ENCODE measurements at regions of chr2 and their contacts with region 1.

Region 1: GRCh38 chr2:21317131-21317530 is 193.4 kb downstream of the TDRD15 start:
- DNase-seq: peak in 2 of 3 donors; percentile 35 to 85
- ATAC-seq: peak; percentile 76
- H3K4me3 ChIP-seq: no peak overlapping the region
- H3K4me1 ChIP-seq: no peaks in the 10 kb centered on the region
- CTCF ChIP-seq: peak; percentile 39

Region 2: DNA sequence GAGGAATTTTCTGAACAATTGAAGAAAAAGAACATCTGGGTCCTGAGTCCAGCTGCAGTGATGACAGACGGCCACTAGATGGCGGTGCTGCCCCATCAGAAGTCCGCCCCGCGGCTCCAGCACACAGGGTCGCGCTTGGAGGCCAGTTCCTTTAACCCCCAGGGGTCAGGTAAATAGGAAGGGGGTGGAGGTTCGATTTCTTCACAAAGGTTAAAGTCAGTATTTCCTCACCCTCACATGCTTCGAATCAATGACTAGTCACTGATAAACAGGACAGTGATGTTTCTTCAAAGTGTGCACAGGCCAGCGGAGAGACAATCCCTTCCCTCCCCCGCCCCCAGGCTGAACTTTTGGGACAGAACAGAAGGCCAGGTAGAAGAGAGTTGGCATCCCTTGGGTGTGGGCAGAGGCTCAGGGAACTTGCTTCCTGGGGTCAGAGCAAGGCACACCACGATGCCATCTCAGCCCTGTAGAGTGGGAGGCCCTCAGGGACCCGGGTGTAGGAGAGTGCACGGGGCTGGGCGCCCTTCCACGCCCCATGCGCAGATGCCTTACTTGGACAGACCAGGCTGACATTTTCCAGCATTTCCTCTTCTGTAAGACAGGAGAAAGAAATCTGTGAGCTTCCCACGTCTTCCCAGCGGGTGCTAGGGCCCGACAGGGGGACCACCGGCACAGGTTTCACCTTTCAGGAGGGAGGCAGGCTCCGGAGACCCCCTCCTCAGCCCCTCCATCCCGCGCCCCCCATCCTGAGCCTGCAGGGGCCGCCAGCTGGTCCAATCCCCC is 274.0 kb before region 1 on chr2:
- intact Hi-C with region 1: loop called in 1 of 2 experiments (anchors 10 kb)
- DNase-seq: peak; percentile 60 to 64 (median 63)
- ATAC-seq: peak; percentile 76
- H3K4me3 ChIP-seq: no peak overlapping the region
- H3K4me1 ChIP-seq: no peaks in the 10 kb centered on the region
- CTCF ChIP-seq: peak; percentile 89

Region 3: GRCh38 chr2:21175895-21176646 is 141.1 kb before region 1 on chr2:
- intact Hi-C with region 1: loop called (anchors 2 to 10 kb)
- DNase-seq: peak in 1 of 3 donors; percentile 53
- ATAC-seq: no peak
- H3K4me3 ChIP-seq: no peak overlapping the region
- H3K4me1 ChIP-seq: no peaks in the 10 kb centered on the region
- CTCF ChIP-seq: no peak

Region 4: GRCh38 chr2:21220930-21221329 is 96.2 kb before region 1 on chr2:
- intact Hi-C with region 1: no loop called
- DNase-seq: no peak
- ATAC-seq: no peak
- H3K4me3 ChIP-seq: no peak overlapping the region
- H3K4me1 ChIP-seq: no peaks in the 10 kb centered on the region
- CTCF ChIP-seq: no peak

Measured in mucosa of descending colon (tissue), 3 donors.